Right lobe of liver (tissue), 6 donors: ENCODE measurements at regions of chr16 and their contacts with region 1.

Region 1: DNA sequence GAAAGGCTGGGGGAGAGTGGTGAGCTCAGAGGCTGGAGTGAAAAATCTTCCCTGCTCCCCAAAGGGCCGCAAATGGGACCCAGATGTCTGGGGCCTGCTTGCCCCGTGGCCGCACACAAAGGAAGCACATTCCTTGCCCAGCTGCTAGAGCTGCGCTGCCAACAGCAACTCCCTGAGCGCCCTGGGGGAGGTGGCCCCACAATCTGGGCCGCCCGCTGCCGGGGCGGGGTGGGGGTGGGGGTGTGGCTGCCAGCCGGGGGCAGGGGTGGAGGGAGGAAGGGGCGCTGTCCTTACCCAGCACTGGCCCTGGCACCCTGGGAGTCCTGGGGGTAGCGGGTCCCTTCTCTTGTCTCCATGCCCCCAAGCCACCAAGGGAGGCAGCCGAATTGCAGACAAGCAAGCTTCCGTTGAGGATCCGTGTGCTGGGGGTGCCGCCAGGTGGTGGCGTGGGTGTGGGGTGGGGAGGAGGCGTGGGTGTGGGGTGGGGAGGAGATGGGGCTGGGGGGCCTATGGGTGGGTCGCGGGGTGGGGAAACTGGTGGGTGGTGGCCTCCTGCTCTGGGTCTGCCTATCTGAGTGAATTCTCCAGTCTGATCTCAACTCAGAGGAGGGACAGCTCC is 48.4 kb upstream of the PABPN1L start:
- DNase-seq: no peak
- ATAC-seq: no peak
- H3K4me3 ChIP-seq: no peak overlapping the region
- H3K27ac ChIP-seq: no peak overlapping the region
- H3K4me1 ChIP-seq: no peaks in the 10 kb centered on the region
- H3K27me3 ChIP-seq: no peaks in the 10 kb centered on the region
- CTCF ChIP-seq: no peak
- POLR2A ChIP-seq: no peak

Region 2: DNA sequence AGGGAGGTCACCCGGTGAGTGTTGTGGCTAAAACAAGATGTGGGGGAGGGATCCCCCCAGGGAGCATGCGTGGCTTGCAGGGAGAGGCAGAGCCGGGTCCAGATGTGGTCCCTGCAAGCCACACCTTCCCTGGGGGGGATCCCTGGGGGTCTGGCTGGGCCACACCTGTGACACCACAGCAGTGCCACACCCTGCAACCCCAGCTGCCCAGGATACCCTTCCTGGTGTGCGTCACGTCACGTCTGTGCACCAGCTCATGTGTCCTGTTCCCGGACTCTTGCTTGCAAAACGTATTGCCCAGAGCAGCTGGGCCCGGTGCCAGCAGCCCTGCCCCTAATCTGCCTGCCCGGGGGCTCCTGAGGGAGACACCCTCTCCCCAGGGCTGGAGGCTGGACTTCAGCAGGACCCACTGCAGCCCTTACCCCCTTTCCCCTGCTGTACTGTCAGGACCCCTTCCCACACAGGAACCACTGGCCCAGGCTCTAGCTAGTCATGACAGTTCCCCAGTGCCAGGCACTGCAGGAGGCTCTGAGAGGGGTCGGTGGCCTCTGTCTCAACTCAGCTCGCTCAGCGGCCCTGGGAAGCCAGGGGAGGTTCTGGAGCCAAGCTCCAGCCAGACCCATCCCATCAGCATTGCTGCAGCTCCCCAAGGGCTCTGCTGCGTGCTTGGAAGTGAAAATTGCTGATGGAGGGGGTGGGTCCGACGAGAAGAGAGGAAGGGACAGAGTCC is 153.0 kb after region 1 on chr16:
- intact Hi-C with region 1: loop called in 1 of 2 experiments (anchors 10 kb)
- DNase-seq: no peak
- ATAC-seq: peak in 3 of 4 donors; percentile 9 to 36 (median 10)
- H3K4me3 ChIP-seq: no peak overlapping the region
- H3K27ac ChIP-seq: no peak overlapping the region
- H3K4me1 ChIP-seq: no peaks in the 10 kb centered on the region
- H3K27me3 ChIP-seq: no peaks in the 10 kb centered on the region
- CTCF ChIP-seq: no peak
- POLR2A ChIP-seq: no peak